Activated CD8-positive, alpha-beta memory T cell treated with anti-CD3 and anti-CD28 coated beads, Interleukin-2, amount 10 ng/mL, durations not matched to agents 7 days and 5 days (primary cell): ENCODE measurements at regions of chr13 and their contacts with region 1.

Region 1: DNA sequence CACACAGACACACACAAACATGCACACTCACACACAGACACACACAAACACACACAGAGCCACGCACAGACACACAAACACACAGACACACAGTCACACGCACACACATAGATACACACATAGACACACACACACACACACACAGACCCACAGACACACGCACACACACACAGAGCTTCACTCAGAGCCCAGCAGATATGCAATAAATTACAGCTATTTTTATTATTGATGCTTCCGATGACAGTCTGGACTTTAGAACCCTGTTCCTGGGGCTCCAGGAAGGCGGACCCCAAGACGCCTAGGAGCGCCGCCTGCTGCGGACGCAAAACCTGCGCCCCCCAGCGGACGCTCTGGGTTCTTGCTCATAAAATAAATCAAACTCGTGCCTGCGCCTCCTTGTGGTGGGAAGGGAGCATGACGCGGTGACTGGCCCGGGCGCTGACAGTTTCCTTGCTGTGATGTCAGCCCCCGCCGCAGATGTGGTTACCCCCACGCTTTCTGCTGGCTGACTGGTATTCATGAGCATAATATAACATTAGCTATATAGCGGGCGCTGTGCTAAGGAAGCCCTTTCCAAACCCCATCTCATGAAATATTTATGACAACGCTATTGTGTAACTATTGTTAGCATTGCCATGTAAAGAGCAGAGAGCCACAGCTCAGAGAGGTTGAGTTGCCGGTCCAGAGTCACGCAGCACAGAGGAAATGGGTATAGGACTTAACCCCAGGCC is 64.4 kb upstream of the TM9SF2 start:
- DNase-seq: peak; percentile 97
- ATAC-seq: peak; percentile 70
- H3K4me3 Mint-ChIP-seq: peak overlapping the region; percentile 12
- H3K27ac Mint-ChIP-seq: peak overlapping the region; percentile 81
- H3K4me1 Mint-ChIP-seq: peaks cover 68% of the 10 kb centered on the region
- H3K27me3 Mint-ChIP-seq: peaks cover 17% of the 10 kb centered on the region

Region 2: DNA sequence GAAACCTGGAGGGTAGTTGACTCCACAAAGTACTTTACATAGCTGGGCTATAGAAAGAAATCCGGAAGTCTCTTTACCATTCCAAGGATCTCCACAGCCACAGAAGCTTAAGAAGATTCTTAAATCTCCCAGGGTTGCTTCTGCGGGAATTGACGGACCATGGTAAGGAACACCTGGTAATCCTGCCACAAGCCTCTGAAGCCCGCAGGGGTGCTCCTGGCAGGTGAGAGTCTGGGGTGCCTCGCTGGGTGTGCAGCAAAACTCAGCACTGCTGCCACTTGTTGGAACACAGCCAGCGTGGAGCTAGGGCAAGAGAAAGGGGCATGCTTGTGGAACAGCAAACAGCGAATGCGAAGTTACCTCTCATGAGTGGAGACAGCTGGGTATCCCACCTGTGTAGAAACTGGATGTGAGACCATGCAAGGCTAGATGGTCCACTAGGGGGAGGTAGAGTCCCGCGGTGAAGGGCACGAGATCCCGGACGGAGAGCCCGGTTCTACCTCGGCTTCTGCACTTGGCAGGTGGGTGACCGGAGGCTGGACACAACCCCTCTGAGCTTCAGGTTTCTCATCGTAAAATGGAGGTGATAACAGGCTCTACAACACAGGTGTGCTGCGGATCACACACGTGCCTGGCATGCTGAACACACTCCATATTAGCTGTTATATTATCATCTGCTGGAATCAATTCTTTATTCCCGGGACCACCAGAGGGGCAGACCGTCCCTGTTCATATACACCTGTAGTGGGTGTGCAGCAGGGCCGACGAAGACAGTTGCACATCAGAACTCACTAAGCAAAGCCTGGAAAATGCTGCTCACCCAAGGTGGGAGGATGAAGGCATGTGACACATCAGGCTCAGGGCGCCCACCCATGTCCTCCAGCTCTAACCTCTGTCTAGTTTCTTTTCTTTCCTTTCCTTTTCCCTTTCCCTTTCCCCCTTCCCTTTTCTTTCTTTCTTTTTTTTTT is 260.3 kb before region 1 on chr13:
- CTCF ChIA-PET with region 1: interaction called, 41 read pairs
- DNase-seq: peak; percentile 84
- ATAC-seq: peak; percentile 88
- H3K4me3 Mint-ChIP-seq: no peak overlapping the region
- H3K27ac Mint-ChIP-seq: peak overlapping the region; percentile 53
- H3K4me1 Mint-ChIP-seq: peaks cover 31% of the 10 kb centered on the region
- H3K27me3 Mint-ChIP-seq: peaks cover 2% of the 10 kb centered on the region

Region 3: GRCh38 chr13:99228737-99229691 is 207.8 kb before region 1 on chr13:
- CTCF ChIA-PET with region 1: interaction called, 10 read pairs
- DNase-seq: no peak
- ATAC-seq: peak; percentile 34
- H3K4me3 Mint-ChIP-seq: peak overlapping the region; percentile 71
- H3K27ac Mint-ChIP-seq: peak overlapping the region; percentile 91
- H3K4me1 Mint-ChIP-seq: peaks cover 74% of the 10 kb centered on the region
- H3K27me3 Mint-ChIP-seq: no peaks in the 10 kb centered on the region

Region 4: GRCh38 chr13:99356158-99357091 is 80.4 kb before region 1 on chr13:
- CTCF ChIA-PET with region 1: interaction called, 11 read pairs
- DNase-seq: peak; percentile 83
- ATAC-seq: peak; percentile 67
- H3K4me3 Mint-ChIP-seq: peak overlapping the region; percentile 48
- H3K27ac Mint-ChIP-seq: peak overlapping the region; percentile 95
- H3K4me1 Mint-ChIP-seq: peaks cover 91% of the 10 kb centered on the region
- H3K27me3 Mint-ChIP-seq: no peaks in the 10 kb centered on the region

Region 5: GRCh38 chr13:99417201-99418102 is 19.4 kb before region 1 on chr13:
- CTCF ChIA-PET with region 1: interaction called, 58 read pairs
- DNase-seq: no peak
- ATAC-seq: no peak
- H3K4me3 Mint-ChIP-seq: no peak overlapping the region
- H3K27ac Mint-ChIP-seq: no peak overlapping the region
- H3K4me1 Mint-ChIP-seq: peaks cover 33% of the 10 kb centered on the region
- H3K27me3 Mint-ChIP-seq: no peaks in the 10 kb centered on the region

Region 6: DNA sequence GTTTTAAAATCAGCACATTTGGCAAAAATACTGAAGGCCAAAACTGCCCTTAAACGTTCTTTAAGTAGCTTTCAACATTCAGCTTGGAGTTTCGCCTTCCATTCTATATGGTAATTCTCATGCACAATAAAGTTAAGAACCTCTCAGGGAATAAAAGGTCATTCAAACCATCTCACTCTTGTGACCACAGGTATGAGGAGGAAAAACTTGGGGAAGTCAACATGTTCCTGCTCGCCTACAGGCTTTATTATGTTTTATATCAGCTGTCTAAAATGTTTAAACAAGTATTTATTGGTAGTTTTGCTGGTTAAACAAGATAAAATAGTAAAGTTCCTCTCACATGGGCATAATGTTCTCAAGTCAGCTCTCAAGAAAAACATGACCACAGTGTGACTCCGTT is 44.5 kb after region 1 on chr13:
- CTCF ChIA-PET with region 1: interaction called, 10 read pairs
- DNase-seq: no peak
- ATAC-seq: no peak
- H3K4me3 Mint-ChIP-seq: no peak overlapping the region
- H3K27ac Mint-ChIP-seq: no peak overlapping the region
- H3K4me1 Mint-ChIP-seq: peaks cover 41% of the 10 kb centered on the region
- H3K27me3 Mint-ChIP-seq: no peaks in the 10 kb centered on the region